Panc1 (cell line): ENCODE measurements at regions of chr13 and their contacts with region 1.

Region 1: GRCh38 chr13:94710881-94711560 is 1.3 kb downstream of the SOX21 start:
- DNase-seq: no peak
- ATAC-seq: peak; percentile 70
- H3K4me3 ChIP-seq: peak overlapping the region; percentile 48 to 58
- H3K27ac ChIP-seq: no peak overlapping the region
- H3K4me1 ChIP-seq: peaks cover 8% of the 10 kb centered on the region; the same call in 1 of the 2 replicates
- H3K27me3 ChIP-seq: peaks cover 4% of the 10 kb centered on the region; the same call in 1 of the 2 replicates
- CTCF ChIP-seq: peak; percentile 77

Region 2: GRCh38 chr13:95276037-95276505 is 565.0 kb after region 1 on chr13:
- CTCF ChIA-PET with region 1: no interaction called
- POLR2A ChIA-PET with region 1: interaction called, 10 read pairs
- in situ Hi-C with region 1: no loop called
- intact Hi-C with region 1: no loop called
- DNase-seq: no peak
- ATAC-seq: no peak
- H3K4me3 ChIP-seq: no peak overlapping the region
- H3K27ac ChIP-seq: peak overlapping the region; percentile 96
- H3K4me1 ChIP-seq: peaks cover 54% of the 10 kb centered on the region
- H3K27me3 ChIP-seq: no peaks in the 10 kb centered on the region
- CTCF ChIP-seq: no peak